Mucosa of descending colon (tissue), 3 donors: ENCODE measurements at regions of chr19 and their contacts with region 1.

Region 1: GRCh38 chr19:48845384-48845783 is 9.1 kb upstream of the HSD17B14 start:
- DNase-seq: no peak
- ATAC-seq: no peak
- H3K4me3 ChIP-seq: no peak overlapping the region
- H3K4me1 ChIP-seq: no peaks in the 10 kb centered on the region
- CTCF ChIP-seq: no peak

Region 2: DNA sequence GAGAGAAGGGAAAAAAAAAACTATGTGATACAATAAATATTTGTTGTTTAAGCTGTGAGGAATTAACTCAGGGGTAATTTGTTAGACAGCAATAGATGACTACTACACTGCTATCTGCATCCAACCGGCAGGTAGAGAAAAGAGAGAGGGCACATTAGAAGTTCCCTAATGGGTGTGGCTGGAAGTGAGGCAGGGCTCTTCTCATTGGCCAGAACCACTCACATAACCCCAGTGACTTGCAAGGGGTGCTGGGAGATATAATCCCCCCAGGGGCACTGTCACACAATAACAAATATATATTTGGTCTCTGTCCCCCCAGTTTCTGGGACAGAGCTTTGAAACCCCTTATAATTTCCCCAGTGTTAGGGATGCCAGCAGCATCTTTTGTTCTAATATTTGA is 65.7 kb before region 1 on chr19:
- intact Hi-C with region 1: loop called in 1 of 2 experiments (anchors 5 kb)
- DNase-seq: no peak
- ATAC-seq: no peak
- H3K4me3 ChIP-seq: no peak overlapping the region
- H3K4me1 ChIP-seq: no peaks in the 10 kb centered on the region
- CTCF ChIP-seq: no peak